ENCODE measurements at regions of chr1 and their contacts with region 1.

Region 1: GRCh38 chr1:235105051-235106043 is 23.3 kb downstream of the TOMM20 start:
- DNase-seq: peak in 3 of 9 experiments; percentile 36 to 76 (median 57)
- ATAC-seq: peak; percentile 44
- H3K4me3 ChIP-seq: peak overlapping the region in 1 of 2 experiments; percentile 35
- H3K4me3 Mint-ChIP-seq: peak overlapping the region; percentile 79
- H3K27ac ChIP-seq: peak overlapping the region in 1 of 2 experiments; percentile 27
- H3K27ac Mint-ChIP-seq: peak overlapping the region; percentile 86
- H3K4me1 ChIP-seq: peaks cover 20% of the 10 kb centered on the region
- H3K4me1 Mint-ChIP-seq: peaks cover 35% of the 10 kb centered on the region
- H3K27me3 ChIP-seq: no peaks in the 10 kb centered on the region
- H3K27me3 Mint-ChIP-seq: no peaks in the 10 kb centered on the region
- CTCF ChIP-seq: no peak

Region 2: DNA sequence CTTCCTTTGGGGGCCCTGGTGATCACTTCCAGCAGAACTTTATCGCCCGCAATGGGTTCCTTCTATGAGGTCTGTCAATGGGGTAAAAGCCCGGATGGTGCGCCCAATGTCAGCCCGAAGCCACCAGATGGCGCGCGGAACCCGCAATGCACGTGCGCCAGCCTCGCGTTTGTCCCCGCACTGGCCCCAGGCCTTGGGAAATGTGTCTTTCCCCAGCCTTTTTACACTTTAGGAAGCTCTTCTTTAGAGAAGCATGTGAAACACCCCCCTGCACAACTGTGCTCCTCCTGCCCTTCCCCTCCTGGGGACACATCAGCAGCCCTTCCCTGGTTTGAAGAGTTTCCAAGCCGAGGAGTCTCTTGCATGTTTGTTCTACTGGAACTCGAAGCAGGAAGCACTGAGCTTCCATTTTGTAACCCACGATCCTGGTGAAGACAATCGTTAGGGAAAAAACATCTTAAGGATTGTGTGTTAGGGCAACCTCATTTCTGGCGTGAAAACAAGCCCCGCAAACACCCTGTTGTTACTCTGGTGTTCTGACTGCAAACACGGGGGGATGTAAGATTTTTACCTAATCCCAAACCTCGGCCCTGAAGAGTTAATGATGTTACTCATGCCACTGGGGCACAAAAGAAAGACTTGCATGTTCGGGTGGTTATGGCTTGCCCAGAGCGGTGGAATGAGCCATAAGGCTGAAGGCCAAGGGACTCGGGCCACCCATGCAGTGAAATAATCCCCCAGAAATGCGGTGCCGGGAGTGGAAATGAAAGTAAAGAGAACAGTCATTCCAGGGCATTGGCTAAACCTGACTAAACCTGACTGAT is 606.0 kb before region 1 on chr1:
- CTCF ChIA-PET with region 1: interaction called, 7 read pairs
- POLR2A ChIA-PET with region 1: no interaction called
- intact Hi-C with region 1: loop called in 1 of 2 experiments (anchors 1 kb)
- DNase-seq: peak; percentile 65 to 90 (median 81)
- ATAC-seq: peak; percentile 98
- H3K4me3 ChIP-seq: no peak overlapping the region
- H3K4me3 Mint-ChIP-seq: no peak overlapping the region
- H3K27ac ChIP-seq: no peak overlapping the region
- H3K27ac Mint-ChIP-seq: no peak overlapping the region
- H3K4me1 ChIP-seq: no peaks in the 10 kb centered on the region
- H3K4me1 Mint-ChIP-seq: peaks cover 8% of the 10 kb centered on the region
- H3K27me3 ChIP-seq: no peaks in the 10 kb centered on the region
- H3K27me3 Mint-ChIP-seq: peaks cover 4% of the 10 kb centered on the region
- CTCF ChIP-seq: peak; percentile 80

Region 3: GRCh38 chr1:234875953-234876855 is 229.1 kb before region 1 on chr1:
- CTCF ChIA-PET with region 1: no interaction called
- POLR2A ChIA-PET with region 1: no interaction called
- intact Hi-C with region 1: no loop called
- DNase-seq: no peak
- ATAC-seq: no peak
- H3K4me3 ChIP-seq: no peak overlapping the region
- H3K4me3 Mint-ChIP-seq: no peak overlapping the region
- H3K27ac ChIP-seq: no peak overlapping the region
- H3K27ac Mint-ChIP-seq: no peak overlapping the region
- H3K4me1 ChIP-seq: no peaks in the 10 kb centered on the region
- H3K4me1 Mint-ChIP-seq: peaks cover 7% of the 10 kb centered on the region
- H3K27me3 ChIP-seq: no peaks in the 10 kb centered on the region
- H3K27me3 Mint-ChIP-seq: no peaks in the 10 kb centered on the region
- CTCF ChIP-seq: no peak

Region 4: GRCh38 chr1:235093696-235094592 is 11.4 kb before region 1 on chr1:
- CTCF ChIA-PET with region 1: interaction called, 10 read pairs
- POLR2A ChIA-PET with region 1: interaction called, 4 read pairs
- intact Hi-C with region 1: no loop called
- DNase-seq: peak; percentile 74 to 90 (median 82)
- ATAC-seq: peak; percentile 100
- H3K4me3 ChIP-seq: no peak overlapping the region
- H3K4me3 Mint-ChIP-seq: no peak overlapping the region
- H3K27ac ChIP-seq: no peak overlapping the region
- H3K27ac Mint-ChIP-seq: no peak overlapping the region
- H3K4me1 ChIP-seq: peaks cover 3% of the 10 kb centered on the region
- H3K4me1 Mint-ChIP-seq: peaks cover 7% of the 10 kb centered on the region
- H3K27me3 ChIP-seq: peaks cover 0 to 4% of the 10 kb centered on the region in 2 experiments
- H3K27me3 Mint-ChIP-seq: peaks cover 15% of the 10 kb centered on the region
- CTCF ChIP-seq: peak; percentile 91

Region 5: GRCh38 chr1:235128456-235129328 is 23.3 kb after region 1 on chr1 and contains the start of gene TOMM20:
- CTCF ChIA-PET with region 1: interaction called, 15 read pairs
- POLR2A ChIA-PET with region 1: interaction called, 13 read pairs
- intact Hi-C with region 1: loop called (anchors 2 kb)
- DNase-seq: peak; percentile 88 to 98 (median 91)
- ATAC-seq: peak; percentile 88
- H3K4me3 ChIP-seq: peak within 1 kb of the TSS; percentile 83 to 98
- H3K4me3 Mint-ChIP-seq: peak within 1 kb of the TSS; percentile 88
- H3K27ac ChIP-seq: peak within 1 kb of the TSS; percentile 92 to 95
- H3K27ac Mint-ChIP-seq: peak within 1 kb of the TSS; percentile 93
- H3K4me1 ChIP-seq: peaks cover 36% of the 10 kb centered on the region
- H3K4me1 Mint-ChIP-seq: peaks cover 44% of the 10 kb centered on the region
- H3K27me3 ChIP-seq: no peaks in the 10 kb centered on the region
- H3K27me3 Mint-ChIP-seq: no peaks in the 10 kb centered on the region
- CTCF ChIP-seq: no peak
- total RNA-seq, gene TOMM20: 165 to 166 TPM

Region 6: GRCh38 chr1:235160957-235161684 is 55.8 kb after region 1 on chr1 and contains the start of gene RBM34:
- CTCF ChIA-PET with region 1: interaction called, 4 read pairs
- POLR2A ChIA-PET with region 1: interaction called, 6 read pairs
- intact Hi-C with region 1: loop called (anchors 1 kb)
- DNase-seq: peak; percentile 83 to 96 (median 93)
- ATAC-seq: peak; percentile 87
- H3K4me3 ChIP-seq: peak within 1 kb of the TSS; percentile 89 to 91
- H3K4me3 Mint-ChIP-seq: peak within 1 kb of the TSS; percentile 99
- H3K27ac ChIP-seq: peak within 1 kb of the TSS; percentile 91 to 93
- H3K27ac Mint-ChIP-seq: peak within 1 kb of the TSS; percentile 100
- H3K4me1 ChIP-seq: peaks cover 40% of the 10 kb centered on the region
- H3K4me1 Mint-ChIP-seq: peaks cover 18% of the 10 kb centered on the region
- H3K27me3 ChIP-seq: no peaks in the 10 kb centered on the region
- H3K27me3 Mint-ChIP-seq: no peaks in the 10 kb centered on the region
- CTCF ChIP-seq: no peak
- total RNA-seq, gene RBM34: 243 to 267 TPM

Region 7: DNA sequence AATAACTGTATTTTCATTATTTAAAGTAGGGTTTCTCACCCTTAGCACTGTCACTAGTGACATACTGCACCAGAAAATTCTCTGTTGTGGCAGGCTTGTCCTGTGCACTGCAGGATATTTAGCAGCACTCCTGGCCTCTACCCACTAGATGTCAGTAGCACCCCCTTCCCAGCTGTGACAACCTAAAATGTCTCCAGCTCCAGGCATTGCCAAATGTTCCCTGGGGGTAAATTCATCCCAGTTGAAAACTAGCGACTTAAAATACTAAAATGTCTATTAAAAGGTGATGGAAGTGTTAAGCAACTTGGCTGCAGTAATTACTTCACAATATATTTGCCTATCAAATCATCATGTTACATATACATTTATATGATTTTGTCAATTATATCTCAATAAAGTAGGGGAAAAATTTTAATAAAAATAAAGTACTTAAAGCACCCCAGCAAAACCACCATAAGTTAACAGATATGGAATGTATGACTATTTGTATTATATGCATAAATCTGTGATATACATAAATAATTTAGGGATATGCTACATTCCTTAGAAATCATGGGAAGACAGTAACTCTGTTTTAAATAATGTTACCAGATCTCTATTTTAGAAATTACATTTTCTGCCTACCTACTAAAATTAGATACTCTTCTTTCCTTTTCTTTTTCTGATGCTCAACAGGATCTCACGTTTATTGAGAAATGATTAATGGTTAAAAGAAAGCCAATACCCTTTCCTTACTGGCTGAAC is 148.0 kb after region 1 on chr1:
- CTCF ChIA-PET with region 1: interaction called, 3 read pairs
- POLR2A ChIA-PET with region 1: interaction called, 3 read pairs
- intact Hi-C with region 1: loop called in 1 of 2 experiments (anchors 10 kb)
- DNase-seq: peak; percentile 36 to 83 (median 66)
- ATAC-seq: peak; percentile 97
- H3K4me3 ChIP-seq: no peak overlapping the region
- H3K4me3 Mint-ChIP-seq: no peak overlapping the region
- H3K27ac ChIP-seq: no peak overlapping the region
- H3K27ac Mint-ChIP-seq: no peak overlapping the region
- H3K4me1 ChIP-seq: peaks cover 6% of the 10 kb centered on the region
- H3K4me1 Mint-ChIP-seq: peaks cover 33% of the 10 kb centered on the region
- H3K27me3 ChIP-seq: no peaks in the 10 kb centered on the region
- H3K27me3 Mint-ChIP-seq: no peaks in the 10 kb centered on the region
- CTCF ChIP-seq: peak; percentile 97

Region 8: GRCh38 chr1:235336903-235337302 is 231.6 kb after region 1 on chr1:
- CTCF ChIA-PET with region 1: no interaction called
- POLR2A ChIA-PET with region 1: no interaction called
- intact Hi-C with region 1: loop called in 1 of 2 experiments (anchors 10 kb)
- DNase-seq: peak in 3 of 9 experiments; percentile 35 to 74 (median 58)
- ATAC-seq: peak; percentile 92
- H3K4me3 ChIP-seq: peak overlapping the region in 1 of 2 experiments; percentile 28
- H3K4me3 Mint-ChIP-seq: peak overlapping the region; percentile 81
- H3K27ac ChIP-seq: peak overlapping the region; percentile 13 to 52
- H3K27ac Mint-ChIP-seq: peak overlapping the region; percentile 93
- H3K4me1 ChIP-seq: peaks cover 22% of the 10 kb centered on the region
- H3K4me1 Mint-ChIP-seq: peaks cover 46% of the 10 kb centered on the region
- H3K27me3 ChIP-seq: no peaks in the 10 kb centered on the region
- H3K27me3 Mint-ChIP-seq: no peaks in the 10 kb centered on the region
- CTCF ChIP-seq: no peak